ENCODE measurements at regions of chrX and their contacts with region 1.

Region 1: GRCh38 chrX:139932901-139933796 is at the start of gene ATP11C:
- DNase-seq: peak; percentile 78
- H3K4me3 ChIP-seq: peak within 1 kb of the TSS; percentile 57 to 73 (median 58)
- H3K27ac ChIP-seq: peak within 1 kb of the TSS; percentile 62
- H3K4me1 ChIP-seq: no peaks in the 10 kb centered on the region
- H3K27me3 ChIP-seq: no peaks in the 10 kb centered on the region
- CTCF ChIP-seq: no peak
- total RNA-seq, gene ATP11C: 10.8 to 25.0 TPM

Region 2: GRCh38 chrX:138756234-138756633 is 1176.9 kb before region 1 on chrX:
- CTCF ChIA-PET with region 1: no interaction called
- dilution Hi-C with region 1: no loop called
- in situ Hi-C with region 1: loop called in 1 of 2 experiments (anchors 25 kb)
- intact Hi-C with region 1: no loop called
- DNase-seq: peak; percentile 37
- H3K4me3 ChIP-seq: no peak overlapping the region
- H3K27ac ChIP-seq: no peak overlapping the region
- H3K4me1 ChIP-seq: no peaks in the 10 kb centered on the region
- H3K27me3 ChIP-seq: no peaks in the 10 kb centered on the region
- CTCF ChIP-seq: peak; percentile 21 to 55

Region 3: GRCh38 chrX:139759637-139760036 is 173.5 kb before region 1 on chrX:
- CTCF ChIA-PET with region 1: no interaction called
- dilution Hi-C with region 1: no loop called
- in situ Hi-C with region 1: no loop called
- intact Hi-C with region 1: loop called (anchors 10 kb)
- DNase-seq: peak; percentile 15
- H3K4me3 ChIP-seq: no peak overlapping the region
- H3K27ac ChIP-seq: no peak overlapping the region
- H3K4me1 ChIP-seq: peaks cover 7% of the 10 kb centered on the region
- H3K27me3 ChIP-seq: no peaks in the 10 kb centered on the region
- CTCF ChIP-seq: peak; percentile 37 to 48

Region 4: GRCh38 chrX:139826065-139827044 is 106.8 kb before region 1 on chrX:
- CTCF ChIA-PET with region 1: no interaction called
- dilution Hi-C with region 1: no loop called
- in situ Hi-C with region 1: no loop called
- intact Hi-C with region 1: loop called (anchors 2 kb)
- DNase-seq: peak; percentile 75
- H3K4me3 ChIP-seq: peak overlapping the region in 1 of 3 experiments; percentile 9
- H3K27ac ChIP-seq: no peak overlapping the region
- H3K4me1 ChIP-seq: no peaks in the 10 kb centered on the region
- H3K27me3 ChIP-seq: no peaks in the 10 kb centered on the region
- CTCF ChIP-seq: no peak

Region 5: GRCh38 chrX:139967300-139967699 is 34.2 kb after region 1 on chrX:
- CTCF ChIA-PET with region 1: no interaction called
- dilution Hi-C with region 1: no loop called
- in situ Hi-C with region 1: no loop called
- intact Hi-C with region 1: loop called (anchors 2 kb)
- DNase-seq: no peak
- H3K4me3 ChIP-seq: no peak overlapping the region
- H3K27ac ChIP-seq: no peak overlapping the region
- H3K4me1 ChIP-seq: no peaks in the 10 kb centered on the region
- H3K27me3 ChIP-seq: no peaks in the 10 kb centered on the region
- CTCF ChIP-seq: peak; percentile 17 to 42

Region 6: DNA sequence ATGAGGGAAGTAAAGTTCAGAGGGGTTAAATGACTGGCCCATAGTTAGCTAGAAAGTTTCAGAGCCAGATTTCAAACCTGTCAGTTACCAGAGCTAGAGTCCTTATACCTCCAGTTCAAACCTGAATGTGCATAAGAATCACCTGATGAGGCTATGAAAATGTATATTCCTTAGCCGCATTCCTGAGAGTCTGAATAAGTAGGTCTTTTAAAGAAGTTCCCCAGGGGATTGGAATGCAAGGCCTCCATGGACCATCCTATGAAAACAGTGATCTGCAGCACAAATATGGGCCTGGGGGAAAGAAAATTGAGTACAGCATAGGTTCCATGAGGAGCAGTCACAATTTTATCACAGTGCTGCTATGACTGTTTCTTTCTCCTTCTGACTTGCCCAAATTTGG is 296.0 kb after region 1 on chrX:
- CTCF ChIA-PET with region 1: no interaction called
- dilution Hi-C with region 1: no loop called
- in situ Hi-C with region 1: no loop called
- intact Hi-C with region 1: no loop called
- DNase-seq: no peak
- H3K4me3 ChIP-seq: no peak overlapping the region
- H3K27ac ChIP-seq: no peak overlapping the region
- H3K4me1 ChIP-seq: no peaks in the 10 kb centered on the region
- H3K27me3 ChIP-seq: no peaks in the 10 kb centered on the region
- CTCF ChIP-seq: no peak